CD8-positive, alpha-beta T cell (primary cell): ENCODE measurements at regions of chr20 and their contacts with region 1.

Region 1: GRCh38 chr20:17735206-17735804 is 35.5 kb downstream of the BANF2 start:
- DNase-seq: no peak
- ATAC-seq: no peak
- H3K4me3 ChIP-seq: no peak overlapping the region
- H3K4me3 Mint-ChIP-seq: no peak overlapping the region
- H3K27ac ChIP-seq: no peak overlapping the region
- H3K27ac Mint-ChIP-seq: no peak overlapping the region
- H3K4me1 ChIP-seq: no peaks in the 10 kb centered on the region
- H3K4me1 Mint-ChIP-seq: no peaks in the 10 kb centered on the region
- H3K27me3 ChIP-seq: no peaks in the 10 kb centered on the region
- H3K27me3 Mint-ChIP-seq: peaks cover 7% of the 10 kb centered on the region
- CTCF ChIP-seq: no peak

Region 2: GRCh38 chr20:17569616-17570346 is 165.5 kb before region 1 on chr20 and contains the start of gene DSTN:
- CTCF ChIA-PET with region 1: no interaction called
- POLR2A ChIA-PET with region 1: no interaction called
- intact Hi-C with region 1: no loop called
- DNase-seq: peak; percentile 76 to 94 (median 86)
- ATAC-seq: peak; percentile 88
- H3K4me3 ChIP-seq: peak within 1 kb of the TSS; percentile 80 to 92
- H3K4me3 Mint-ChIP-seq: peak within 1 kb of the TSS; percentile 85
- H3K27ac ChIP-seq: peak within 1 kb of the TSS; percentile 73 to 81
- H3K27ac Mint-ChIP-seq: peak within 1 kb of the TSS; percentile 91
- H3K4me1 ChIP-seq: peaks cover 24% of the 10 kb centered on the region
- H3K4me1 Mint-ChIP-seq: peaks cover 28% of the 10 kb centered on the region
- H3K27me3 ChIP-seq: no peaks in the 10 kb centered on the region
- H3K27me3 Mint-ChIP-seq: no peaks in the 10 kb centered on the region
- CTCF ChIP-seq: no peak
- total RNA-seq, gene DSTN: 40.5 to 42.9 TPM

Region 3: DNA sequence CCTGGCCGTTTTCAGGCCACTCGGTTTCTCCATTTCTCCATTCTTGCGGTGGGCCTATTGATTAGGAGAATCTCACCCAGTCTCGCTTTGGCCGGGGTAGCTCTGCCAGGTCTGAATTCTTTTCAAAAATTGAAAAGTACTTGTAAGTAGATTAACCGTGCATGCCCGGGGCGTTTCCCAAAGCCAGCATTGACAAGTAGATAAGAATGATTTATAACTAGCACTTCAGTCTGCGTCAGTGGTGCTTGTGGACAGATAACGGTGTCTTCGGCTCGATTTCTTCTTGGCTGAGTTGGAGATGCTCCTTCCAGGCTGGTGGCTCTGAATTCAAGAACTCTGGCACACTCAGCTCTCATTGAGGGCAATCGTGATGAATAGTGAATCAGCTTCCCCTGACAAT is 1506.1 kb after region 1 on chr20:
- CTCF ChIA-PET with region 1: no interaction called
- POLR2A ChIA-PET with region 1: no interaction called
- intact Hi-C with region 1: loop called in 1 of 2 experiments (anchors 5 kb)
- DNase-seq: no peak
- ATAC-seq: no peak
- H3K4me3 ChIP-seq: no peak overlapping the region
- H3K4me3 Mint-ChIP-seq: no peak overlapping the region
- H3K27ac ChIP-seq: no peak overlapping the region
- H3K27ac Mint-ChIP-seq: no peak overlapping the region
- H3K4me1 ChIP-seq: no peaks in the 10 kb centered on the region
- H3K4me1 Mint-ChIP-seq: no peaks in the 10 kb centered on the region
- H3K27me3 ChIP-seq: no peaks in the 10 kb centered on the region
- H3K27me3 Mint-ChIP-seq: peaks cover 4% of the 10 kb centered on the region
- CTCF ChIP-seq: no peak